GM10248 (cell line): ENCODE measurements at regions of chr4 and their contacts with region 1.

Region 1: DNA sequence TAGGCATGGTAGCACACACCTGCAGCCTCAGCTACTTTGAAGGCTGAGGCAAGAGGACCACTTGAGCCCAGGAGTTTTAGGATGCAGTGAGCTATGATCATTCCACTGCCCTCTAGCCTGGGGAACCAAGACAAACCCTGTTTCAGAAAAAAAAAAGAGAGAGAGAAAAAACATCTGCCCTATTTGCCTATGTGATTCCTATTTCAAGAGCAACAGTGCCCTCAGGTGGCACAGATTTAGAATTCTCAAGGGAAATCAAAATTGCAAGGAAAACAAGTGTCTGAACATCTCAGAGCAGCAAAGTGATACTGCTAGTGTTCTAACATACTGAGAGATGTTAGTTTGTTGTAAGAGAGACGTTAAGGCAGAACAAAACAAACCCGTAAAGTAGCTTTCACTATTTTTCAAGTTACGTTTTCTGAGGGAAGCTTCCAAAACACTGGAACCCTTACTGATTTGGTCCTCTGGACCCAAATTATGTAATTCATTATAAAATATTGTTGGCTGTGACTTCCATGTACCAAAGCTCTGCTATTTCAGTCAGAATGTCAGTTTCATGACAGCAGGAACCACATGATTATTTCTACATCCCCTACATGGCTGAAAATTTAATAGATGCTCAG is 7.9 kb downstream of the BDH2 start:
- DNase-seq: peak; percentile 30
- CTCF ChIP-seq: peak; percentile 65

Region 2: DNA sequence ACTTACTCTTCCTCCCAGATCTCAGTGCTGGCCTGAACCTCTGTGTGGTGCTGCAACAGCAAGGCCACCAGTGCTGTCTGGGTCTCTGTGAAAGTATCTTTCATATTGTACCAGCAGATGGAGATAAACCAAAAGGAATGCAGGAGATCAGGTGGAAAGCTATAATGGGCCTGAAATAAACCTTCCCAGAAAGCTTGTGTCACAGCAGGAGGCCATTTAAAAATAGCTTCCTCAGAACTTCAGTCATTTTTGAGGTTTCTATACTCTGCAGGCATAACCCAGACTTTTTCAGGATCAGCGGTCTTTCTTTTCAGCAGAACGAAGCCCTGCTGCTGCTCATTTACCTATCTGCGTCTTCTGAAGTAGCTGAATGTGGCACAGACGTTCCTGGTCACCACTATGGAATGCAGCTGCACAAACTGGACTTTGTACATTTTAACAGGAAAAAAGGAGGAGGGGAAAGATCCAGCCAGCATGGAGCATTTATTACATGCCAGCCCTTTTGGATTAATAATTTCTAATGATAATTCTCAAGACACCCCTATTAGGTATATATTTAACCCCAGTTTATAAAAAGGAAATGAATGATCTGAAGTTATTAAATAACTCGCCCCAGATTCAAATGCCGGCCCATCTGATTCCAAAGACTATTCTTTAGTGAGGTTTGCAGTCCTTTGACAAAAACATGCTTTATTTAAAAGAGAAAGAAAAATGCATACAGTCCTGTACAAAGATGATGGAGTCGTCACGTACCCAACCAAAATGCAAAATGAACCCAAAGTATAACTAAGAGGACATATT is 470.8 kb before region 1 on chr4:
- CTCF ChIA-PET with region 1: interaction called, 28 read pairs
- POLR2A ChIA-PET with region 1: no interaction called
- DNase-seq: peak; percentile 43
- CTCF ChIP-seq: peak; percentile 42

Region 3: GRCh38 chr4:102826890-102827673 is 264.6 kb before region 1 on chr4 and contains the start of gene UBE2D3:
- CTCF ChIA-PET with region 1: interaction called, 10 read pairs
- POLR2A ChIA-PET with region 1: no interaction called
- DNase-seq: peak; percentile 75
- CTCF ChIP-seq: peak; percentile 20

Region 4: GRCh38 chr4:103019308-103020124 is 72.2 kb before region 1 on chr4 and contains the start of gene SLC9B1:
- CTCF ChIA-PET with region 1: interaction called, 12 read pairs
- POLR2A ChIA-PET with region 1: no interaction called
- DNase-seq: peak; percentile 91
- CTCF ChIP-seq: no peak

Region 5: GRCh38 chr4:103060453-103061148 is 31.1 kb before region 1 on chr4:
- CTCF ChIA-PET with region 1: interaction called, 18 read pairs
- POLR2A ChIA-PET with region 1: no interaction called
- DNase-seq: no peak
- CTCF ChIP-seq: no peak

Region 6: DNA sequence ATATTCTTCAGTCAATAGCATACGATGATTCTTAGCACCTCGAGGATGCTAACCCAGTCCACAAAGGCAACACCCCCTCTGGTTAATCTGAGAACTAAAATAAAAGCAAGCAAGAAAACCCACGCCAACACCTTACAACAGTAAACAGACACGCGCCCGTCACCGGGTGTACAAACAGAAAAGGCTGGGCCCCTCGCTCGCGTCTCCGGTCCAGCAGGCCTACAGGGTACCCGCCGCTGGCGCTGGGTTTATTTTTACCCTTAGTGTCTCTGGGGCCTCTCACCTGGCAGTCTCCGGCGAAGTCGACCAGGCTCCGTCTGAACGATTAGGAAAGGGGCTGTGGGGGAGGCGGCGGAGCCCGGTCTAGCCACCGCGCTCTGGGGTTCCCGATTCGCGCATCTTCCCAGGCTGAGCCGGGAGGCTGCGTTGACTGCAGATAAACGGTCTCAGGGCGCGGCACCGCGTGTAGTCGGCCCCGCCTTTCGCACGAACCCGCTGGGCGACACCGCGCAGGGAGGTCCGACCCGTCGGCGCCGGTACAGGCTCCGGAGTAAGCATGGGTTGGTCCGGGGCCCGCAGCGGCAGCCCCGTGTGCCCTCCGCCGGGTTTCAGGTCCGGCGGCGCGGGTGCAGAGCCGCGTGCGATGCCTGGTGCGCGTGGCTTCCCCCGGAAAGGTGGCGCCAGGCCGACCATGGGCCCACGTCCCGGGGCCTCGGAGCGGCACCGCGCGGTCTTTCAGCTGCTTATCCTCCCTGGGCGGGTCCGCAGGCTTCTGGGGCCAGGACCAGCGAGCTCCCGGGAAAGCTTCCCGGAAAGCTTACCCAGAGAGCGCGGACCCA is 15.6 kb before region 1 on chr4:
- CTCF ChIA-PET with region 1: interaction called, 128 read pairs
- POLR2A ChIA-PET with region 1: no interaction called
- DNase-seq: peak; percentile 70
- CTCF ChIP-seq: no peak

Region 7: GRCh38 chr4:103289186-103289585 is 197.5 kb after region 1 on chr4:
- CTCF ChIA-PET with region 1: no interaction called
- POLR2A ChIA-PET with region 1: no interaction called
- DNase-seq: no peak
- CTCF ChIP-seq: no peak

Region 8: GRCh38 chr4:103429283-103429682 is 337.6 kb after region 1 on chr4:
- CTCF ChIA-PET with region 1: no interaction called
- POLR2A ChIA-PET with region 1: no interaction called
- DNase-seq: peak; percentile 27
- CTCF ChIP-seq: peak; percentile 5